Ovary (tissue), 10 donors: ENCODE measurements at regions of chr20 and their contacts with region 1.

Region 1: DNA sequence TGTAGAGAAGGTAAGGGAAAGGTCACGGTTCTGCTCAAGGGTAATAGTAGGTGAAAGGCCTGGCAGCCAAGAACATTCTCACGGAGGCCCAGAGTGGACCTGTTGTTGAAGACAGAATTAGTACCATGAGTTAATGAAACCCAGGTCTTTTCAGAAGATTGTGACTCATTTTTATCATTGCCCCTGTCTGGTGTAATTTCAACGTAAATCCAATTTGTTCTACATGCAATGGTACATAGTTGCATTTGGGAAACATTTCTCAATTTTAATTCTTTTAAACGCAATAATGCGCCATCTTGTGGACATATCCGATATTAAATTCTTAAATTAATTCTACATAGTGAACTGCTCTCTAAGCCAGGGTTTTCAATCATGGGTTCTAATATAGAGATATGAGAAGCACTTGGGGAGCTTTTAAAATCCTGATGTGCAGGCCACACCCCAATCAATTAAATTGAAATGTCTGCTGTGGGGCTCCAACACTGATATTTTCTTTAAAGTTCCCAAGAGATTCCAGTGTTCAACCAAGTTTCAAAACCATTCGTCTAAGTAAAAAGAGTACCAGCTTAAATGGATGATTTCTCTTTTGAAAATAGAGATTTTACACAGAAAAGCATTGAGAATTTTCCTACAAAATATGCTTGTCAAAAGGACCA is 257.4 kb downstream of the PLCB1 start:
- DNase-seq: no peak
- H3K4me3 ChIP-seq: no peak overlapping the region
- H3K27ac ChIP-seq: no peak overlapping the region
- H3K4me1 ChIP-seq: no peaks in the 10 kb centered on the region
- H3K27me3 ChIP-seq: no peaks in the 10 kb centered on the region
- CTCF ChIP-seq: peak in 2 of 3 donors; percentile 23 to 43
- EP300 ChIP-seq: no peak
- POLR2A ChIP-seq: no peak

Region 2: GRCh38 chr20:8043687-8044282 is 345.7 kb before region 1 on chr20:
- intact Hi-C with region 1: loop called in 2 of 4 experiments (anchors 5 kb)
- DNase-seq: no peak
- H3K4me3 ChIP-seq: no peak overlapping the region
- H3K27ac ChIP-seq: no peak overlapping the region
- H3K4me1 ChIP-seq: no peaks in the 10 kb centered on the region
- H3K27me3 ChIP-seq: no peaks in the 10 kb centered on the region
- CTCF ChIP-seq: peak; percentile 54 to 72 (median 56)
- EP300 ChIP-seq: no peak
- POLR2A ChIP-seq: no peak

Region 3: DNA sequence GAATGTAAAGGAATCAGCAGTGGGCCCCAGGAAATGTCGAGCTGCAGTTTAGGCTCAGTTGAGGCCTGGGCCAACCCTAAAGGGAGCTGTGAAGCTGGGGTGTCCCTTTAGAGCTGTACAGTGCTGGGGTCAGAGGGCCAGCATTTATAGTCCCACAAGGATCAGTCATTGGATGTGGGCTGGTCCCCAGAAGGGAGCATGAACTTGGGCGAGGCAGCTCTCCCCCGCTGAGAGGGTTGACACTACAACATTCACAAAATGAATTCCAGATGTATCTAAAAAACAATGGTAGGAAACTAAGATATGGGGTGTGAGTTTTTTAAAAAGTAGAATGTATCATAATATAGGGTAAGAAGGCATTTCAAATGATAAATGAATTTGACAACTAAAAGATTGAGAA is 340.2 kb before region 1 on chr20:
- intact Hi-C with region 1: loop called in 2 of 4 experiments (anchors 5 kb)
- DNase-seq: no peak
- H3K4me3 ChIP-seq: no peak overlapping the region
- H3K27ac ChIP-seq: no peak overlapping the region
- H3K4me1 ChIP-seq: no peaks in the 10 kb centered on the region
- H3K27me3 ChIP-seq: no peaks in the 10 kb centered on the region
- CTCF ChIP-seq: no peak
- EP300 ChIP-seq: no peak
- POLR2A ChIP-seq: no peak

Region 4: GRCh38 chr20:8131598-8132483 is 257.7 kb before region 1 on chr20 and contains the start of gene PLCB1:
- intact Hi-C with region 1: loop called (anchors 5 to 10 kb)
- DNase-seq: peak; percentile 75 to 88 (median 84)
- H3K4me3 ChIP-seq: peak within 1 kb of the TSS; percentile 55
- H3K27ac ChIP-seq: peak within 1 kb of the TSS in 1 of 2 donors; percentile 51
- H3K4me1 ChIP-seq: peaks cover 5% of the 10 kb centered on the region
- H3K27me3 ChIP-seq: no peaks in the 10 kb centered on the region
- CTCF ChIP-seq: peak; percentile 18 to 82 (median 73)
- EP300 ChIP-seq: no peak
- POLR2A ChIP-seq: no peak
- total RNA-seq, gene PLCB1: 3.6 to 29.5 (median 10.0) TPM